A673 (cell line): ENCODE measurements at regions of chr17 and their contacts with region 1.

Region 1: DNA sequence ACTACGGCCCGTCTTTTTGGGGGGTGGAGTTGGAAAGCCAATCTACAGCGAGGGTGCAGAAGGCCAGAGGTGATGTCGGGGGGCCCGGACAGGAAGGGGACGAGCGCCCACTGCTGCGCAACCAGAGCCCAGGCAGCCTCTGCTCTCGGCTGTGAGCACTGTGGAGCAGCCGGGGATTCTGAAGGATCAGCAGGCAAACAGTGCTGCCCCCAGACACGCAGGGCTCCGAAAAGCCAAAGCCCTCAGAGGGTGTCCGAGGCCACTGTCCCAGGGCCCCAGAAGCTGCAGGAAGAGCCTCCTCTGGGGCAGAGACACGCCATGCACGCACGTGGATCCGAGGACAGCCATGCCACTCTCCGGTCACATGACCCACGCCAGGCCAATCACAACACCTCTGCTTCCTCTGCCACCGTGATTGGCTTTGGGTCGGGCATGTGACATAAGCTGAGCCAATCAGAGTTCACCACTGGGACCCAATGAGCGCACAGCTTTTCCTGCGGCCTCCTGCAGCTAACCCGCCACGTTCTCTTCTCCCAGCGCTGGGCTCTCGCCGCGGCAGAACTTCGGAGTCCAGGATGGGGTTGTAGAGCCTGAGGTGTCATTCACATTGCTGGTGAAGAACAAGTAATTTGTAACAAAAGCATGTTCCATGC is 40.7 kb downstream of the ACTG1 start:
- DNase-seq: peak; percentile 98
- H3K4me3 ChIP-seq: peak overlapping the region; percentile 41
- H3K27ac ChIP-seq: peak overlapping the region; percentile 62
- H3K4me1 ChIP-seq: peaks cover 12% of the 10 kb centered on the region
- H3K27me3 ChIP-seq: no peaks in the 10 kb centered on the region
- CTCF ChIP-seq: peak; percentile 75

Region 2: DNA sequence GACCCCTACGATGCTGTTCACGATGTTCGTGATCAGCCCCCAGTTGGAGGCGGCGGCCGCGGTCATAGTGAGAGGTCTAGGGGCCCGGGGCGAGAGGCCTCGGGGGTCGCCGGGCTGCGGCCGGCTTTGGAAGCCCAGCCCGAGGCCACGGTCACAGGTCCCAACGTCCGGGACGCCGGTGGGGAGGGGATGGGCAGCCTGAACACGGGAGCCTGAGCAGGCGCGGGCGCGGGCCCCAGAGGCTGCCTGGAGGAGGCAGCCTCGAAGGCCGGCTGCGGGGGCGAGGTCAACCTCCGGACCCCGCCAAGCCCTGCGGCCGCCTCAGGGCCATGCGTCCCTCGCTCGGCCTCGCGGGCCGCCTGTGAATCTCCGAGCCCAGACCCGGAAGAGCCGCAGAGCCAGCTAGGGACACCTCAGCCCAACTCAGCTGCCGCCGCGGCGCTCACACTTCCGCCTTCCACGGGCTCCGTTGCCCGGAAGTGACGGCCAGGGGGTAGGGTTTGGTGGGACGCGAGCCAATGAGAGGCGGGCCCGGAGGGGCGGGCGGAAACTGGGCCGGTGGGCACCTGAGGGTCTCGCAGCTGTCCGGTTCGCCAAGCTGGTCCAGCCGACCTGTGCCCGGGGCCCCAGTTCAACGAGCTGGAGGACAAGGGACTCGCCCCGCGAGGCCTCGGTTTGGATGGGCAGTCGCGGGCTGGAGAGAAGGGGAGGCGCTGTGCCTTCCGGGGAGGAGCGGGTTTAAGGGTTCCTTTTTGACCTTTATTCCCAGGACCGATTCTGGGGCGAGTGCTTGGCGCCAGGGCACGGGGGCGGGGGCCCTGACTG is 176.9 kb before region 1 on chr17 and contains the start of gene SLC38A10:
- CTCF ChIA-PET with region 1: no interaction called
- POLR2A ChIA-PET with region 1: no interaction called
- intact Hi-C with region 1: loop called (anchors 5 kb)
- DNase-seq: peak; percentile 91
- H3K4me3 ChIP-seq: peak within 1 kb of the TSS; percentile 100
- H3K27ac ChIP-seq: peak within 1 kb of the TSS; percentile 92
- H3K4me1 ChIP-seq: peaks cover 7% of the 10 kb centered on the region
- H3K27me3 ChIP-seq: no peaks in the 10 kb centered on the region
- CTCF ChIP-seq: no peak
- total RNA-seq, gene SLC38A10: 75.1 and 77.3 TPM in 2 replicates

Region 3: GRCh38 chr17:81484195-81484979 is 12.5 kb after region 1 on chr17:
- CTCF ChIA-PET with region 1: no interaction called
- POLR2A ChIA-PET with region 1: no interaction called
- intact Hi-C with region 1: no loop called
- DNase-seq: peak; percentile 90
- H3K4me3 ChIP-seq: peak overlapping the region; percentile 55
- H3K27ac ChIP-seq: peak overlapping the region; percentile 71
- H3K4me1 ChIP-seq: peaks cover 85% of the 10 kb centered on the region
- H3K27me3 ChIP-seq: no peaks in the 10 kb centered on the region
- CTCF ChIP-seq: peak; percentile 76

Region 4: GRCh38 chr17:81702971-81703746 is 231.2 kb after region 1 on chr17 and contains the start of gene MRPL12:
- CTCF ChIA-PET with region 1: no interaction called
- POLR2A ChIA-PET with region 1: no interaction called
- intact Hi-C with region 1: no loop called
- DNase-seq: peak; percentile 97
- H3K4me3 ChIP-seq: peak within 1 kb of the TSS; percentile 98
- H3K27ac ChIP-seq: peak within 1 kb of the TSS; percentile 97
- H3K4me1 ChIP-seq: peaks cover 23% of the 10 kb centered on the region
- H3K27me3 ChIP-seq: no peaks in the 10 kb centered on the region
- CTCF ChIP-seq: no peak
- total RNA-seq, gene MRPL12: 184 and 186 TPM in 2 replicates

Region 5: DNA sequence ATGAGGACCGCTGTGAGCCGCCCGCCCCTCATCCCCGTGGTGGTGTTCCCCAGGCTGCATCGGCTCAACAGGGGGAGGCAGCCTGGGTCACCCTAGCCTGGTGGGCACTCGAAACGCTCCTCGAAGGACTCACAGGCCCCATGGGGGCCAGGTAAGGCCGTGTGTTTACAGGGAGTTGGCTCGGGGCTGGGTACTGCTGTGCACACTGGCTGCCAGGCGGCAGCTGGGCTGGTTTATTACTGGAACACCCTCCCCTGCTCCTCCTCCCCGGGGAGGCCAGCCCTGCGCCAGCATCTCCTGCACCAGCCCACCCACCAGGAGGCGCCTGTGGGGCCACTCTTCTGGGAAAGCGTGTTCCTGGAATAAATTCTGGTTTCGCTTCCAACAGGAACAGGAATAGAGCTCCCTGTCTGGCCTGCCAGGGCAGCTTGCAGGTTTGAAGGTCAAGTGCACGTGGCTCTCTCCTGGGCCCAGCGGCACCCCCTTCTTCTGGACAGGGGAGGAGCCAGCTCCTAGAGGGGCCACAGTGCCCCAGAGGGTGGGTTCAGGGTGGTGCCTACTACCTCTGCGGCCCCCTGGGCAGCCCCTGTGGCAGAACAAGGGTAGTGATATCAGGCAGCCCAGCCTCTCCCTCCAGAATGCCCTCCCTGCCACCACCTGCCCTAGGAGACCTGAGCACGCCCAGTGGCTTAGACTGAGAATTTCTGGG is 349.8 kb after region 1 on chr17:
- CTCF ChIA-PET with region 1: no interaction called
- POLR2A ChIA-PET with region 1: no interaction called
- intact Hi-C with region 1: no loop called
- DNase-seq: peak; percentile 92
- H3K4me3 ChIP-seq: no peak overlapping the region
- H3K27ac ChIP-seq: peak overlapping the region; percentile 62
- H3K4me1 ChIP-seq: peaks cover 11% of the 10 kb centered on the region
- H3K27me3 ChIP-seq: no peaks in the 10 kb centered on the region
- CTCF ChIP-seq: peak; percentile 83